ENCODE measurements at regions of chr15 and their contacts with region 1.

Region 1: GRCh38 chr15:77659350-77660321 is 26.9 kb upstream of the LINGO1 start:
- DNase-seq: peak; percentile 85 to 96 (median 93)
- ATAC-seq: peak; percentile 94
- H3K4me3 ChIP-seq: no peak overlapping the region
- H3K27ac ChIP-seq: no peak overlapping the region
- H3K4me1 ChIP-seq: peaks cover 0 to 21% of the 10 kb centered on the region in 2 experiments; a peak in 3 of 5 replicates
- H3K27me3 ChIP-seq: peaks cover 12 to 62% of the 10 kb centered on the region in 2 experiments; a peak in 4 of 5 replicates
- CTCF ChIP-seq: peak; percentile 61 to 81 (median 75); a peak in 5 of 6 replicates
- EP300 ChIP-seq: no peak
- POLR2A ChIP-seq: no peak
- RAD21 ChIP-seq: peak; percentile 30 to 56

Region 2: DNA sequence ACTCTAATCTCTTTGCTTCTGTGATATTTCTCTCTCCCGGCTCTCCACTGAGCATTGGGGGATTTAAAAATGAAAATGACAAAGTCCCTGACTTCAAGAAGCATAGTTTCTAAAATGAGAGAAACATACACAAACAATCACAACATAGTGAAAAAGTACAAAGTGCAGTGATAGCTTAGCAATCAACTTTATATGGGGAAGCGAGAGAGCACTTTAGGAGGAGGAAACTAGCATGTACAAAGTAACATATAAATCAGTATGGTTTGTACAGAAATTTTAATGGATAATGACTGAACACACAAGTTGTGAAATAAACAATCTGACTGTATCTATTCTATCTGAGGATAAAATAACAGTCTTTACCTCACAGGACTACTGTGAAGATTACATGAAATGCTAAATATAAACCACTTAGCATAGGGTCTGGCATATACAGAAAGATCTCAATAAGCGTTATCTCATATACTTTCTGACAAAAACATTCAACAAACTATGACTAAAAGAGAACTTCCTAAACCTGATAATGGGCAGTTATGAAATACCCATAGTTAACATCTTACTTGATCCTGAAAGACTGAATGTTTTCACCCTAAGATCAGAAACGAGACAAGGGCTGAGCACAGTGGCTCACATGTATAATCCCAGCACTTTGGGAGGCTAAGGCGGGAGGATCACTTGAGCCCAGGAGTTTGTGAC is 300.9 kb before region 1 on chr15:
- CTCF ChIA-PET with region 1: no interaction called
- POLR2A ChIA-PET with region 1: no interaction called
- in situ Hi-C with region 1: no loop called
- intact Hi-C with region 1: no loop called
- DNase-seq: no peak
- ATAC-seq: no peak
- H3K4me3 ChIP-seq: no peak overlapping the region
- H3K27ac ChIP-seq: no peak overlapping the region
- H3K4me1 ChIP-seq: no peaks in the 10 kb centered on the region
- H3K27me3 ChIP-seq: no peaks in the 10 kb centered on the region
- CTCF ChIP-seq: no peak
- EP300 ChIP-seq: no peak
- POLR2A ChIP-seq: no peak
- RAD21 ChIP-seq: no peak

Region 3: DNA sequence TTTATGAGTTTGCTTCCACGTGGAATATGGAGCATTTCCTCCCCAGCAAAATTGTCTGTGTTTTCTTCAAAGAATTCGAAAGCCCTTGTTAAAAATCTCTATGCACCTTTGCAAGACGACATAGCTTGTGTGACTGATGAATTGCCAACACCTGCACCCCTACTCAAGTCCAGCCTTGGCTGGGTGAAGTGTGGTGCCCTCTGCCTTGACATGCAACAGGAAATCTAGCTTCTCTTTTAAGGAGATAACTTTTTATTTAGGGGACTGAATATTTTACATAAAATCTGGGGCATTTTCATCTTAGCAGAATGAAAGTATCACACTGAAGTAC is 238.3 kb before region 1 on chr15:
- CTCF ChIA-PET with region 1: no interaction called
- POLR2A ChIA-PET with region 1: no interaction called
- in situ Hi-C with region 1: no loop called
- intact Hi-C with region 1: no loop called
- DNase-seq: peak in 1 of 4 experiments; percentile 34
- ATAC-seq: no peak
- H3K4me3 ChIP-seq: peak overlapping the region; percentile 94
- H3K27ac ChIP-seq: peak overlapping the region; percentile 98
- H3K4me1 ChIP-seq: peaks cover 8 to 25% of the 10 kb centered on the region in 2 experiments; a peak in 3 of 5 replicates
- H3K27me3 ChIP-seq: no peaks in the 10 kb centered on the region
- CTCF ChIP-seq: no peak
- EP300 ChIP-seq: no peak
- POLR2A ChIP-seq: no peak
- RAD21 ChIP-seq: no peak

Region 4: GRCh38 chr15:77633134-77633912 is 26.3 kb before region 1 on chr15:
- CTCF ChIA-PET with region 1: interaction called, 3 read pairs
- POLR2A ChIA-PET with region 1: no interaction called
- in situ Hi-C with region 1: no loop called
- intact Hi-C with region 1: loop called (anchors 1 kb)
- DNase-seq: peak; percentile 86 to 92 (median 90)
- ATAC-seq: peak; percentile 95
- H3K4me3 ChIP-seq: peak overlapping the region; percentile 43
- H3K27ac ChIP-seq: peak overlapping the region; percentile 75
- H3K4me1 ChIP-seq: peaks cover 25 to 55% of the 10 kb centered on the region in 2 experiments; a peak in 4 of 5 replicates
- H3K27me3 ChIP-seq: peaks cover 11 to 28% of the 10 kb centered on the region in 2 experiments; a peak in 4 of 5 replicates
- CTCF ChIP-seq: peak; percentile 100
- EP300 ChIP-seq: no peak
- POLR2A ChIP-seq: peak; percentile 74
- RAD21 ChIP-seq: peak; percentile 80 to 95

Region 5: GRCh38 chr15:77784395-77785292 is 125.0 kb after region 1 on chr15:
- CTCF ChIA-PET with region 1: no interaction called
- POLR2A ChIA-PET with region 1: interaction called, 3 read pairs
- in situ Hi-C with region 1: no loop called
- intact Hi-C with region 1: loop called (anchors 1 kb)
- DNase-seq: peak; percentile 70 to 75 (median 72)
- ATAC-seq: peak; percentile 88
- H3K4me3 ChIP-seq: no peak overlapping the region
- H3K27ac ChIP-seq: no peak overlapping the region
- H3K4me1 ChIP-seq: peaks cover 0 to 16% of the 10 kb centered on the region in 2 experiments; a peak in 2 of 5 replicates
- H3K27me3 ChIP-seq: peaks cover 4 to 40% of the 10 kb centered on the region in 2 experiments
- CTCF ChIP-seq: peak; percentile 78 to 80 (median 80)
- EP300 ChIP-seq: no peak
- POLR2A ChIP-seq: no peak
- RAD21 ChIP-seq: peak in 1 of 2 experiments; percentile 71; a peak in 2 of 4 replicates

Region 6: GRCh38 chr15:77821188-77821958 is 161.7 kb after region 1 on chr15:
- CTCF ChIA-PET with region 1: interaction called, 15 read pairs
- POLR2A ChIA-PET with region 1: interaction called, 4 read pairs
- in situ Hi-C with region 1: no loop called
- intact Hi-C with region 1: loop called (anchors 1 kb)
- DNase-seq: peak; percentile 75 to 78 (median 76)
- ATAC-seq: peak; percentile 92
- H3K4me3 ChIP-seq: no peak overlapping the region
- H3K27ac ChIP-seq: no peak overlapping the region
- H3K4me1 ChIP-seq: peaks cover 0 to 26% of the 10 kb centered on the region in 2 experiments; a peak in 2 of 5 replicates
- H3K27me3 ChIP-seq: peaks cover 9 to 70% of the 10 kb centered on the region in 2 experiments; a peak in 4 of 5 replicates
- CTCF ChIP-seq: peak; percentile 87 to 92 (median 91)
- EP300 ChIP-seq: no peak
- POLR2A ChIP-seq: no peak
- RAD21 ChIP-seq: peak; percentile 58 to 89

Region 7: GRCh38 chr15:77870195-77871065 is 210.8 kb after region 1 on chr15:
- CTCF ChIA-PET with region 1: interaction called, 3 read pairs
- POLR2A ChIA-PET with region 1: no interaction called
- in situ Hi-C with region 1: loop called (anchors 10 kb)
- intact Hi-C with region 1: no loop called
- DNase-seq: peak; percentile 68 to 77 (median 74)
- ATAC-seq: peak; percentile 92
- H3K4me3 ChIP-seq: no peak overlapping the region
- H3K27ac ChIP-seq: no peak overlapping the region
- H3K4me1 ChIP-seq: peaks cover 0 to 16% of the 10 kb centered on the region in 2 experiments; a peak in 2 of 5 replicates
- H3K27me3 ChIP-seq: peaks cover 0 to 47% of the 10 kb centered on the region in 2 experiments; a peak in 3 of 5 replicates
- CTCF ChIP-seq: peak; percentile 75 to 91 (median 82)
- EP300 ChIP-seq: no peak
- POLR2A ChIP-seq: no peak
- RAD21 ChIP-seq: peak in 1 of 2 experiments; percentile 45; a peak in 2 of 4 replicates